ENCODE measurements at regions of chr3 and their contacts with region 1.

Region 1: GRCh38 chr3:172039436-172040077 is at the start of gene FNDC3B:
- DNase-seq: peak; percentile 92 to 96
- ATAC-seq: peak; percentile 85 to 94 (median 91)
- H3K4me3 ChIP-seq: peak within 1 kb of the TSS; percentile 87 to 100 (median 95)
- H3K27ac ChIP-seq: peak within 1 kb of the TSS; percentile 98 to 100 (median 99)
- H3K4me1 ChIP-seq: peaks cover 0 to 46% (median 38%) of the 10 kb centered on the region in 9 donors
- H3K27me3 ChIP-seq: no peaks in the 10 kb centered on the region
- CTCF ChIP-seq: no peak
- total RNA-seq, gene FNDC3B: 65.6 to 118 (median 89.0) TPM

Region 2: GRCh38 chr3:171809821-171810628 is 229.5 kb before region 1 on chr3 and contains the start of gene PLD1:
- intact Hi-C with region 1: loop called in 1 of 10 experiments (anchors 5 kb)
- DNase-seq: peak; percentile 88 to 90
- ATAC-seq: peak; percentile 85 to 95 (median 88)
- H3K4me3 ChIP-seq: peak within 1 kb of the TSS; percentile 53 to 79 (median 68)
- H3K27ac ChIP-seq: peak within 1 kb of the TSS; percentile 80 to 94 (median 90)
- H3K4me1 ChIP-seq: peaks cover 0 to 73% (median 20%) of the 10 kb centered on the region in 9 donors
- H3K27me3 ChIP-seq: no peaks in the 10 kb centered on the region
- CTCF ChIP-seq: peak in 4 of 9 donors; percentile 13 to 45 (median 34)
- total RNA-seq, gene PLD1: 51.4 to 83.3 (median 67.1) TPM

Region 3: DNA sequence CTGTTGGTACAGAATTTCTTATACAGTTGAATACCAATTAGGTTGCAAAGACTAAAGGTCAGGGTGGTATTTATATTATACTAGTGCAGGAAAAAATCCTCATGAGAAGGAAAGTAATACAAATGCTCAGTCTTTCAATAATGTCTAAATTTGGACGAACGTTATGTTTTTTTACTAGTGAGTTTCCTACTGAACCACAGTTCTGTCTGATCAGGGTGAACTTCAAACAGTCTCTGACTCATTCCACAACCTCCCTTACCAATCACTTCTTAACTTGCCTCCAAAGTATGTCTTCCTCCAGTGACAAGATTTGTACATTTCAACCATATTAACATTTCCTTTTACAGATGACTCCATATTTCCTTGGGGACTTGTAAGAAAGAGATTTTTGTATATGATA is 193.0 kb before region 1 on chr3:
- intact Hi-C with region 1: loop called in 1 of 10 experiments (anchors 10 kb)
- DNase-seq: no peak
- ATAC-seq: no peak
- H3K4me3 ChIP-seq: no peak overlapping the region
- H3K27ac ChIP-seq: peak overlapping the region in 1 of 10 donors; percentile 4
- H3K4me1 ChIP-seq: peaks cover 0 to 47% (median 28%) of the 10 kb centered on the region in 9 donors
- H3K27me3 ChIP-seq: no peaks in the 10 kb centered on the region
- CTCF ChIP-seq: no peak

Region 4: DNA sequence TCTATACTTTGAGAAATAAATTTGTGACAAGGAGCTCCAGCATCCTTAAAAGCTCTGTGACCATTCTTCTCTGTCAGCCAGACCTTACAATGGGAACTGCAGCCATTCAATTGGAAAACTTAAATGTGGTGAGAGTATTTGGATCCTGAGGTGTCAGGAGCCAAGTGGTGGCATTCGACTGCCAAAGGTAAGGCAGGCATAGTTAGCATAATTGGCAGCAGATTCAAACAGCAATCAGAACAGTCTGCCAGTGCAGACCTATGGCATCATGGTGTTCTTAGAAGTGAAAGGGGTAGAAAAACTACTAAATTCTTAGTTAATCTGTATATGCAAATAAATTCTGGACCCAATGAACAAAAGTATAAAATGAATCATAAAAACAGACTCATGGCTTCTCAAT is 18.4 kb before region 1 on chr3:
- intact Hi-C with region 1: no loop called
- DNase-seq: no peak
- ATAC-seq: peak in 3 of 8 donors; percentile 51 to 68 (median 55)
- H3K4me3 ChIP-seq: no peak overlapping the region
- H3K27ac ChIP-seq: no peak overlapping the region
- H3K4me1 ChIP-seq: no peaks in the 10 kb centered on the region
- H3K27me3 ChIP-seq: no peaks in the 10 kb centered on the region
- CTCF ChIP-seq: no peak

Region 5: DNA sequence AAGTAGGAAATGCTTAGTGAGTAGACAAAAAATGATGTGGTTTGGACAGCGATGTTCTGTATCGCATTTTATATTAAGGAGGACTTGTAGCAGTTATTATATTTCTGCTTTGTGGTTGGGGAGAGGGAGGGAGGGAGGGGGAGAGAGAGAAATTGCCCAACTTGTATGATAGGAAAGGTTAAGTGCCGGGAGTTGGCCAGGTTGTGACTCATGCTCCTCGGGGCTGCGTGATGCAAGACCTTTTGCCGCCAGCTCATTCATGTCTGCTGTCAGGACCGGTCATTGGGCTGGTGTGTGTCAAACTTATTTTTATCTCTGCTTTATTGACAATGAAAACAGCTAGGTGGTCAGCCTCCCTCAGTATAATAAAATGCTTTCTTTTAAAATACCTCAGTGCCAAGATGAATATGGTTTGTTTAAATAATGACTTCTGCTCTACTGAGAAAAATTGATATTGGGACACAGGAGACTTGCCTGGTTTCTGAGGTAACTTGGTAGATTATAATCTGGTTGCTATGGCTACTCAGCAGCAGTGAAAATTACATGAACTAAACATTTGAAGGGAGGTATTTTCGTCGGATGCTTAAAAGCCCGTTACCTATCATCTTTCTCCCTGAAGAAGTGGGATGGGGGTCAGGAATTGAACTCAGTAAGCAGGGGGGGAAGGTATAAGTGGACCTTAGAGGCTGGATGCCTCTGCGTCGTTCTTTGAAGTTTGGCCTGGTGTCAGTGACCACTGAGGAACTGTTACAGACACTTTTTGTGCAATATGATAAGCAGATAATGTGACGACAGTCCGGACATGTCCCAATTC is 90.5 kb after region 1 on chr3:
- intact Hi-C with region 1: loop called in 5 of 10 experiments (anchors 5 to 10 kb)
- DNase-seq: peak; percentile 84 to 88
- ATAC-seq: peak; percentile 85 to 96 (median 90)
- H3K4me3 ChIP-seq: no peak overlapping the region
- H3K27ac ChIP-seq: peak overlapping the region; percentile 19 to 88 (median 72)
- H3K4me1 ChIP-seq: peaks cover 22 to 100% (median 63%) of the 10 kb centered on the region in 9 donors
- H3K27me3 ChIP-seq: no peaks in the 10 kb centered on the region
- CTCF ChIP-seq: no peak

Region 6: DNA sequence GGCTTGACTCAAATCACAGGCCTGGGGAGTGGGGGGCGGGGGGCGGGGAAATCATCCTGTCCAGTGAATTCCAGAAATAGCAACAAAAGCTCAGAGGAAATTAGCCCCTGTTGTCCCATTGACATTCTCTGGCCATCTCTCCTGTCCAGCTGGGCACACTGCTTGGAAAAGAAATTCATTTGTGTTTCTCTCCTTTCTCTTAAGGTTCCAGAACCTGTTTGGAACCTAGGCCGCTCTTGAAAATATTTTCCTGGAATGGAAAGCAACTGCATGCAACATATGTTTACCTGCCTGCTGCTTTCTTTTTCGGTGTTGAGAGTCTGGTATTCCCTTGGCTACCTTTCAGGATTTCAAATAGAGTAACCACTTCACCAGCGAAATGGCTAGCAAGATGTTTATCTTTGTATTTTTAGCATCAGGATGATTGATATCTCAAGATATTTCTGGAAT is 239.7 kb after region 1 on chr3:
- intact Hi-C with region 1: loop called in 3 of 10 experiments (anchors 5 to 10 kb)
- DNase-seq: no peak
- ATAC-seq: peak in 4 of 8 donors; percentile 5 to 25 (median 18)
- H3K4me3 ChIP-seq: no peak overlapping the region
- H3K27ac ChIP-seq: peak overlapping the region in 6 of 10 donors; percentile 17 to 75 (median 69)
- H3K4me1 ChIP-seq: peaks cover 0 to 87% (median 58%) of the 10 kb centered on the region in 9 donors
- H3K27me3 ChIP-seq: no peaks in the 10 kb centered on the region
- CTCF ChIP-seq: no peak

Region 7: GRCh38 chr3:172332256-172333041 is 292.9 kb after region 1 on chr3:
- intact Hi-C with region 1: loop called in 7 of 10 experiments (anchors 5 to 10 kb)
- DNase-seq: peak in 1 of 2 donors; percentile 75
- ATAC-seq: peak; percentile 80 to 91 (median 88)
- H3K4me3 ChIP-seq: no peak overlapping the region
- H3K27ac ChIP-seq: peak overlapping the region in 6 of 10 donors; percentile 22 to 62 (median 40)
- H3K4me1 ChIP-seq: peaks cover 0 to 17% (median 6%) of the 10 kb centered on the region in 9 donors
- H3K27me3 ChIP-seq: no peaks in the 10 kb centered on the region
- CTCF ChIP-seq: peak; percentile 69 to 95 (median 91)

Measured in heart right ventricle (tissue), 16 donors.